SK-N-SH (cell line): ENCODE measurements at regions of chr19 and their contacts with region 1.

Region 1: DNA sequence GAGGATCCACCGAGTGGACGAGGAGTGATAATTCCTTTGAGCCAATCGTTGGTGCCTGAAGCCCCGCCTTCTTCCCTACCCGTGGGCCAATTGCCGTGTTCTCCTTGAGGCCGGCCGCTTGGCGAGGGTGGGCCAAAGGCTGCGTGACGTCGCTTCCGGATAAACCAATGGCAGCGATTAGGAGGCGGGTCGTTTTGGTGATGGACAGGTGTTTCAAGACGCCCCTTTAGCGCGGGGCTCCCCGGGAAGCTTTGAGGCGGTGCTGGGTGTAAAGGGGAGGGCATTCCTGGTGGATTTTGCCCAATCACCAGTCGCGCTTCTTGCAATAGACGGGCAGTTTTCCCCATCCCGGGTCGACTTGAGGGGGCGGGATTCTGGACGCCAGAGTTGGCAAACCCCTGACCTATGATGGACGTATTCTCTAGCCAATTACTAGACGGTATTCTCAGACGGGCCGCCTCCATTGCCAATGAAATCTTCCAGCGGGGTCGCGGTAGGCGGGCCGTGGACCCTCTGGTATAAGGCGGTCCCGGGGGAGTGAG is 310 bp upstream of the PRMT1 start:
- DNase-seq: peak; percentile 93
- H3K4me3 ChIP-seq: peak overlapping the region; percentile 90 to 98
- H3K27ac ChIP-seq: peak overlapping the region; percentile 89 to 95
- H3K4me1 ChIP-seq: peaks cover 24 to 29% of the 10 kb centered on the region in 2 experiments; a peak in 3 of 4 replicates
- H3K27me3 ChIP-seq: no peaks in the 10 kb centered on the region
- CTCF ChIP-seq: no peak
- EP300 ChIP-seq: no peak
- RAD21 ChIP-seq: no peak

Region 2: DNA sequence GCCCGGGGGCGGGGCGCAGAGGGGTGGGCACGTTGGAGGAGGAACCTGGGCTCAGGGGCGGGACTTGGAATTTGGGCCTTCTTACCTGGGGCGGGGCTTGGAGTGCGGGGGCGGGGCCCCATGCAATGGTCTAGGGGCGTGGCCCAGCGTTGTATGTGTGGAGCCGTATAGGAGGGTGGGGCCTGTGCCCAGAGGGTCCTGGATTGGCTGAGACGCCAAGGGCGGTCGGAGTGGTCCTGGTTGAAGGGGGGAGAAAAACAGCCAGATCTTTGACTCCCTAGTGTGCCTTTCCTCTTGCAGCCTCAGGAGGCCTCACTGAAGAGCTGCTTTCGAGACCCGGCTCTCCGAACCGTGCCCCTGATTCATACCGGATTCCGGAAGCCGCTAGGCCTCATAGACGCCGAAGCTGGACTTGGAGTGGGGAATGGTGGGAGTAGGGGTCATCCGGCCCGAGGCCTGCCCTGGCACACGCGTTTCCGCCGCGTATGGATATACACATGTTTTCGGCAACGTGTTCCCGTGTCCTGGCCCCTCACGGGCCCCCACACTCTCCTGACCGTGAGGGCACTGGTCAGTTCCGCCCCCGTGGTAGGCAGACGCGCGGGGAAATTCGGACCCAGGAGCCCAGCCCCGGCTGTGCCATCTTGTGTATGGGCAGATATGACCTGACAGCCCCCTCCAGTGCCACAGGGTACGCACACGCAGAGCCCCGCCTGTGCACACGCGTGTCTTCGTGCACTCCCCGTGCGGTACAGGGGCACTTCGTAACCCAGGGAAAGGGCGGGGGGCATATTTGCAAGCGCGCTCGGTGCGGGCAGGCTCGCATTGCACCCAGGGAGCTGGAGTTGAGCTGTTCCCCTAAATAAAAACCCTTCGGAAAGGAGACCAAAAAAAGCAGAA is 86.4 kb before region 1 on chr19:
- CTCF ChIA-PET with region 1: interaction called, 12 read pairs
- POLR2A ChIA-PET with region 1: interaction called, 7 read pairs
- DNase-seq: peak; percentile 95
- H3K4me3 ChIP-seq: peak overlapping the region; percentile 76 to 79
- H3K27ac ChIP-seq: peak overlapping the region; percentile 78 to 95
- H3K4me1 ChIP-seq: peaks cover 0 to 13% of the 10 kb centered on the region in 2 experiments; a peak in 1 of 4 replicates
- H3K27me3 ChIP-seq: no peaks in the 10 kb centered on the region
- CTCF ChIP-seq: no peak
- EP300 ChIP-seq: no peak
- RAD21 ChIP-seq: no peak

Region 3: DNA sequence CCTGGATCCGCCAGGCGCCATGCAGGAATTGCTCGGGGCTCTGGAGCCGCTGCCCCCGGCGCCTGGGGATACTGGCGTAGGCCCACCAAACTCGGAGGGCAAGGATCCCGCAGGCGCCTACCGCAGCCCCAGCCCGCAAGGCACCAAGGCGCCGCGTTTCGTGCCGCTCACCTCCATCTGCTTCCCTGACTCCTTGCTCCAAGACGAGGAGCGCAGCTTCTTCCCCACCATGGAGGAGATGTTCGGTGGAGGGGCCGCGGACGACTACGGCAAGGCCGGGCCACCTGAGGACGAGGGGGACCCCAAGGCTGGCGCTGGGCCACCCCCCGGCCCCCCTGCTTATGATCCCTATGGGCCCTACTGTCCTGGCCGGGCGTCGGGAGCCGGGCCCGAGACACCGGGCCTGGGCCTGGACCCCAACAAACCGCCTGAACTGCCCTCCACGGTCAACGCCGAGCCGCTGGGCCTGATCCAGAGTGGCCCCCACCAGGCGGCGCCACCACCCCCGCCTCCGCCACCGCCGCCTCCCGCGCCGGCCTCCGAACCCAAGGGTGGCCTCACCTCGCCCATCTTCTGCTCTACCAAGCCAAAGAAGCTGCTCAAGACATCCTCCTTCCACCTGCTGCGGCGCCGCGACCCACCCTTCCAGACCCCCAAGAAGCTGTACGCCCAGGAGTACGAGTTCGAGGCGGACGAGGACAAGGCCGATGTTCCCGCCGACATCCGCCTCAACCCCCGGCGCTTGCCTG is 79.6 kb before region 1 on chr19:
- CTCF ChIA-PET with region 1: interaction called, 12 read pairs
- POLR2A ChIA-PET with region 1: interaction called, 7 read pairs
- DNase-seq: no peak
- H3K4me3 ChIP-seq: no peak overlapping the region
- H3K27ac ChIP-seq: no peak overlapping the region
- H3K4me1 ChIP-seq: peaks cover 0 to 12% of the 10 kb centered on the region in 2 experiments; a peak in 1 of 4 replicates
- H3K27me3 ChIP-seq: no peaks in the 10 kb centered on the region
- CTCF ChIP-seq: 0 out of 2 replicates have a peak, but pooled peaks have one; percentile 8
- EP300 ChIP-seq: no peak
- RAD21 ChIP-seq: no peak

Region 4: DNA sequence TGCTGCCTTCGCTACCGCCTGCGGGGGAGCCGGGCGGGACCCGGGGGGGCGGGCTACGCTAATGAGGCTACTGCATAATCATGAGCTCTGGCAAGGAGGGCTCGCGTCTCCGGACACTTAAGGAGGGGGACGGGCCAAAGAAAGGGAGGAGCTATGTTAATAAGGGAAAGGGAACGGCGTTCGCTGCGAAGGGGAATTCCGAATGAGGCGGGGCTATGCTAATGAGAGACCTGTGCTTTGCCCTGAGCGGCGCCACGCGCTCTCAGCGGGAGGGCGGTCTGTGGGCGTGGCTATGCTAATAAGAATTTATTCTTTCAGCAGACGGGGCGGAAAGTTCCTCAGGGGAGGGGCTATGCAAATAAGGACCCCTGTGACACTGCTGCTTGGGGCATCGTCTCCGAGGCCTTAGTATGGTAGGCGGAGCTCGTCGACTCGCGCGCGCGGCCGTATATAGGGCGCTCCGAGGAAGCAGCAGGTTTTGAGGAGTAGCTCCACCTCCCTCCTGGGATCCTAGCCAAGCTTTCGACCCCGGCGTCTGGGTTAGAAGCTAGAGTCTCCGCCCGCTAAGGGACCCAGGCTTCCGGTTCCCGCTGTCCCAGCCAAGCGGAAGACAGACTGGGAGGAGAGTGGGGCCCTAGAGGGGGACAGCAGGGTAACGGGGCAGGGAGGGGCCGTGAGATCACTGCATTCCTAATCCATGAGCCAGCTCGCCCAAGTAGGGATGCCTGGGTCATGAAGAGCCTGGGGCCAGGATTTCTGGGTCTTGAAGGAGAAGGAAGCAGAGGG is 36.5 kb before region 1 on chr19 and contains the start of gene RRAS:
- CTCF ChIA-PET with region 1: interaction called, 31 read pairs
- POLR2A ChIA-PET with region 1: interaction called, 5 read pairs
- DNase-seq: peak; percentile 95
- H3K4me3 ChIP-seq: peak within 1 kb of the TSS; percentile 64 to 87
- H3K27ac ChIP-seq: peak within 1 kb of the TSS; percentile 99 to 100
- H3K4me1 ChIP-seq: peaks cover 14 to 32% of the 10 kb centered on the region in 2 experiments
- H3K27me3 ChIP-seq: no peaks in the 10 kb centered on the region
- CTCF ChIP-seq: no peak
- EP300 ChIP-seq: peak in 1 of 2 experiments; percentile 71; a peak in 1 of 4 replicates
- RAD21 ChIP-seq: no peak; the same call in 1 of the 2 replicates
- polyA plus RNA-seq, gene RRAS: 113 and 141 TPM in 2 replicates

Region 5: GRCh38 chr19:49655570-49656455 is 20.9 kb before region 1 on chr19:
- CTCF ChIA-PET with region 1: interaction called, 78 read pairs
- POLR2A ChIA-PET with region 1: no interaction called
- DNase-seq: no peak
- H3K4me3 ChIP-seq: no peak overlapping the region
- H3K27ac ChIP-seq: no peak overlapping the region
- H3K4me1 ChIP-seq: no peaks in the 10 kb centered on the region
- H3K27me3 ChIP-seq: no peaks in the 10 kb centered on the region
- CTCF ChIP-seq: no peak
- EP300 ChIP-seq: no peak
- RAD21 ChIP-seq: no peak

Region 6: DNA sequence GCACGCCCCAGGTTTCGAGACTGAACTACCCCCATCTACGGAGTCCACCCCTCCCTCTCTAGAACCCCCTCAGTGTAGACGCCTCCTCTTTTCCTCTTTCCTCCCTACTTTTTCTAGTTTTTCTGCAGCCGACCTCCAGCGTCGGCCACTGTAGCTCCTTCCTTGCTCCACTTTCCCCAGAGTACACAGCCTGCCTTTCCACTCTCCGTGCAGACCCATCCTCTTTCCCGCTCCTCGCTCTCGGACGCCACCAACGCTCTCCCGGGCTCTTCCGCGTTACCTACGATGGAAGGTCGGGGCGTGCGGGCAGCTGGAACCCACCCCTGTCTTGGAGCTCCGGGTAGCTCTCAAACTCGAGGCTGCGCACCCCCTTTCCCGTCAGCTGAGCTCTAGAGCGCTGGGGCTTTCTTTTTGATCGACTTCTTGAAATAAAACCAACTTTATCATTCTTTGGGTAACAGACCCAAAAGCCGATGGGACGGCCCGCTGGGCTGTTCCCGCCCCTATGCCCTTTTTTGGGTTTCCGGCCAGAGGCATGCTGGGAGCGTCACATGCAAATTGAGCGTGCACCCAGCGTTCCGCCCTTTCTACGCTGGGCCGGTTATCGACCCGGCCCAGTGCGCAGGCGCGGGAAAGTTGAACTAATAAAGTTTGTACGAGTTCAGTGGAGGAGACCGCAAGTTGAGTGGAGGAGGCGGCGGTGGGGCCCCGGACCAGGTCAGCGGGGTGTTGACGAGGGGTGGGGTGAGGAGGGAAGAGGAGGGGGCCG is 11.2 kb before region 1 on chr19 and contains the starts of genes BCL2L12 and IRF3:
- CTCF ChIA-PET with region 1: interaction called, 78 read pairs
- POLR2A ChIA-PET with region 1: interaction called, 15 read pairs
- DNase-seq: peak; percentile 95
- H3K4me3 ChIP-seq: peak within 1 kb of the TSS; percentile 73 to 97
- H3K27ac ChIP-seq: peak within 1 kb of the TSS; percentile 76 to 96
- H3K4me1 ChIP-seq: peaks cover 9 to 15% of the 10 kb centered on the region in 2 experiments; a peak in 3 of 4 replicates
- H3K27me3 ChIP-seq: no peaks in the 10 kb centered on the region
- CTCF ChIP-seq: no peak
- EP300 ChIP-seq: no peak
- RAD21 ChIP-seq: no peak
- polyA plus RNA-seq, gene BCL2L12: 20.3 and 27.9 TPM in 2 replicates
- polyA plus RNA-seq, gene IRF3: 85.9 and 112 TPM in 2 replicates

Region 7: DNA sequence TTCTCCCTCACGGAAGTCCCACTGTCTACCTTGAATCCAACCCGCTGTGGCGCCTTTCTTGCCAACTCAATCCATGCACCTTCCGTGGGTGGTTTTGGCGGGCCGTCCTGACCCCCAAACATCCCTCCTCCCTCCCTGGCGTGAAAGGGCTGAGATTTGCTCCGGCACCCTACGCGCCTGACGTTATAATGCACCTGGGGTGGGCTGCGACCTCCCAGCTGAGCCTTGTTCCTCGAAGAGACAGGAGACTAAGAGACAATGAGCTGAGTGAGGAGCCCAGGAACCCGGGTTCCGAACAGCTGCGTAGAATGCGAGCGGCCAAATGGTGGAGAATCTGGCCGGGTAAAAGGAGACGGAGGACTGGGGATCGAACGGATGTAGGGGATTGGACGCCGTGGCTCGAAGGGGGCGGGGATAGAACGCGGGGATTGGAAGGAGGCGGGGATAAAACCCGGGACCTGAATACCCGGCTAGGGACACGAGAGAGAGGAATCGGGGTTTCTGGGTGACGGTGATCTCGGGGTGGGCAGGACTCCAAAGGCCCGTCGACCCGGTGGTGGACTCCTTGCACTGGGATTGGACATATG is 14.0 kb after region 1 on chr19 and contains the start of gene CPT1C:
- CTCF ChIA-PET with region 1: interaction called, 75 read pairs
- POLR2A ChIA-PET with region 1: interaction called, 11 read pairs
- DNase-seq: peak; percentile 96
- H3K4me3 ChIP-seq: peak within 1 kb of the TSS; percentile 77 to 81
- H3K27ac ChIP-seq: peak within 1 kb of the TSS; percentile 60 to 95
- H3K4me1 ChIP-seq: peaks cover 6 to 28% of the 10 kb centered on the region in 2 experiments; a peak in 2 of 4 replicates
- H3K27me3 ChIP-seq: no peaks in the 10 kb centered on the region
- CTCF ChIP-seq: no peak
- EP300 ChIP-seq: no peak
- RAD21 ChIP-seq: no peak
- polyA plus RNA-seq, gene CPT1C: 118 and 139 TPM in 2 replicates

Region 8: DNA sequence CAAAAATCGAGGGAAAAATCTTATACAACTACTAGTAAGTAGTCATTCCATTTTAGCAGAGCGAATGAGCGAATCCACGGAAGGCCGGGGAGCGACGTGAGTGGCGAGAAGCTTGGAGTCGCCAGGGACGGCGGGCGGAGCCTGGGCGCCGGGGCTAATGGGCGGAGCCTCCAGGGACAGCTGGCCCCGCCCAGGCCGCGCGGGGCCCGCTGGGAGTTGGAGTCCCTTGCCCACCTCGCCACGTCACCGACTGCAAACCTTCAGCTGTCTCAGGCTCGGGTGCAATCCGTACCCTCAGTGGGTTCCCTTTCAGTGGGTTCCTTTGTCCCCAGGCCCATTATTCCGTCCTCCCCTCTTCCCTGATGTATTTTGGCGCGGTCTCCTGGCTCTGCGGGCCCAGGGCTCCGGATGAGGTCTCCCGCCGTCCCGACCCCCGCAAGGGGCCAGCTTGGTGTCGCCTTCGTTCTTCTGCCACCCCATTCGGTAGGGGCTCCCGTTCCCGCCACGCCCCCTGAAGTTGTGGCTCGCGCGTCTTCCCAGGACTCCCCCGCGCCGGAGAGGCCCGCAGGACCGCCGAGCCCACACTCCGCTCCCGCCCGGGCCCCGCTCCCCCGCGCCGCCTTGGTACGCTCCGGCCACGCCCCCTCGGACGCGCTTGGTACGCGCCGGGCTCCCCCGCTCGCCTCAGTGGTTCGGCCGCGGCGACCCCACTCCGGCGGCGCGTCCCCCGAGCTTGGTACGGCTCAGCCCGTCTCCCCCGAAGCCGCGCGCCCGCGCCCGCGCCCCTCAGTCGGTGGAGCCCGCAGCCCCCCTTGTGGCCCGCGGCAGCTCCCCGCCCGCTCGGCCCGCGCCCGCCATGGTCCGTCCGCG is 173.9 kb after region 1 on chr19 and contains the start of gene PTOV1:
- CTCF ChIA-PET with region 1: no interaction called
- POLR2A ChIA-PET with region 1: no interaction called
- DNase-seq: peak; percentile 98
- H3K4me3 ChIP-seq: peak within 1 kb of the TSS; percentile 77 to 89
- H3K27ac ChIP-seq: peak within 1 kb of the TSS; percentile 97 to 99
- H3K4me1 ChIP-seq: peaks cover 15 to 32% of the 10 kb centered on the region in 2 experiments; a peak in 3 of 4 replicates
- H3K27me3 ChIP-seq: no peaks in the 10 kb centered on the region
- CTCF ChIP-seq: no peak
- EP300 ChIP-seq: peak in 1 of 2 experiments; percentile 55; a peak in 1 of 4 replicates
- RAD21 ChIP-seq: no peak
- polyA plus RNA-seq, gene PTOV1: 56.1 and 95.0 TPM in 2 replicates